Activated T-helper 1 cell treated with anti-CD3 and anti-CD28 coated beads, Interleukin-12 subunit alpha, Interleukin-12 subunit beta, Interleukin-2, Interleukin-4 antibody, amounts not matched to agents 30 ng/mL and 10 ng/mL and 1 ng/mL, durations not matched to agents 14 hours and 24 hours and 36 hours (primary cell): ENCODE measurements at regions of chr19 and their contacts with region 1.

Region 1: GRCh38 chr19:54518844-54519243 is 16.2 kb downstream of the LAIR2 start:
- DNase-seq: peak; percentile 51
- H3K4me3 Mint-ChIP-seq: peak overlapping the region; percentile 71
- H3K27ac Mint-ChIP-seq: peak overlapping the region; percentile 91
- H3K4me1 Mint-ChIP-seq: peaks cover 59% of the 10 kb centered on the region
- H3K27me3 Mint-ChIP-seq: peaks cover 3% of the 10 kb centered on the region

Region 2: GRCh38 chr19:54502518-54503048 is 16.3 kb before region 1 on chr19 and contains the start of gene LAIR2:
- intact Hi-C with region 1: loop called (anchors 2 kb)
- DNase-seq: no peak
- H3K4me3 Mint-ChIP-seq: peak within 1 kb of the TSS; percentile 79
- H3K27ac Mint-ChIP-seq: peak within 1 kb of the TSS; percentile 79
- H3K4me1 Mint-ChIP-seq: peaks cover 41% of the 10 kb centered on the region
- H3K27me3 Mint-ChIP-seq: peaks cover 13% of the 10 kb centered on the region
- total RNA-seq, gene LAIR2: 45.7 and 49.1 TPM in 2 replicates

Region 3: DNA sequence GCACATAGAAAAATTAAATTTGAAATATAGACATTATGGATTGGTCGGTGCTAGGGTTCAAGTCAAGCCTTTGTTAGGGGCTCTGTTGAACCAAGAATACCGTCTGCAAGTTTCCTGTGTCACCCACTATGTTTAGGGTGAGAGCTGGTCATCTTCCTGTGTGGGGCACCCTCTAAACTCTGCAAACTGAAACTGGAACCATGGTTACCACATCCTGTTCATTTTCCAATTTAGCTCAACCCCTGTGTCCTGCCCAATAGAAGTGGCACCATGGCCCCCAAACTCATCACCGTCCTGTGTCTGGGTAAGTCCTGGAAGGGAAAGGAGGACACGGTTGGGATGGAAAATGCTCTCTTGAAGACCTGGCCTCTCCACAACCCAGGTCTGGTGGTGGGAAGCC is 13.7 kb after region 1 on chr19:
- intact Hi-C with region 1: loop called (anchors 1 kb)
- DNase-seq: no peak
- H3K4me3 Mint-ChIP-seq: peak overlapping the region; percentile 53
- H3K27ac Mint-ChIP-seq: peak overlapping the region; percentile 79
- H3K4me1 Mint-ChIP-seq: peaks cover 40% of the 10 kb centered on the region
- H3K27me3 Mint-ChIP-seq: peaks cover 11% of the 10 kb centered on the region

Region 4: DNA sequence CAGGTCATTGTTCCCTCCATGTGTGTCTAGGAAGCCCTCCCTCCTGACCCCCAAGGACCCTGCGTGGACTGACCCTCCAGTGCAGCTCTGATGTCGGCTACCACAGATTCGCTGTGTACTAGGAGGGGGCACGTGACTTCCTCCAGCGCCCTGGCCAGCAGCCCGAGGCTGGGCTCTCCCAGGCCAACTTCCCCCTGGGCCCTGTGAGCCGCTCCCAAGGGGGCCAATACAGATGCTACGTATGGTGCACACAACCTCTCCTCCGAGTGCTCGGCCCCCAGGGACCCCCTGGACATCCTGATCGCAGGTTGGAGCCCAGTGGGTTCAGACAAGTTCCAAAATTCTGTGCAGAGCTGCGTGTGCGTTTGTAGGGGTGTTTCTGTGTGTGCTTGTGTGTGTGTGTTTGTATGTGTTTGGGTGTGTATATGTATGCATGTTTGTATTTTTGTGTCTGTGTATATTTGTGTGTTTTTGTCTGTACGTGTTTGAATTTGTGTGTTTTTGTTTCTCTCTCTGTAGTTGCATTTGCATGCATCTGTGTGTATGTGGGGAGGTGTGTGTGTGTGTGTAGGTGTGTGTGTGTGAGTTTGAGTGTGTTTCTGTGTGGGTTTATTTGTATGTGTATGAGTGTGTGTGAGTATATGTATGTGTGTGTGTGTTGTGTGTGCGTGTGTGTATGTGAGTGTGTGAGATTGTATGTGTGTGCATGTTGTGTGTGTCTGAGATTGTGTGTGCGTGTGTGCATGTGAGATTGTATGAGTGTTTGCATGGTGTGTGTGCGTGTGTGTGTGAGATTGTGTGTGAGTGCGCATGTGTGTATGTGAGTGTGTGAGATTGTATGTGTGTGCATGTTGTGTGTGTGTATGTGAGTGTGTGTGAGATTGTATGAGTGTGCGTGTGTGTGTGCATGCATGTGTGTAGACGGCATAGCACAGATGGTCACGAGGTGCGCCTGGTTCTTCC is 33.4 kb after region 1 on chr19:
- intact Hi-C with region 1: no loop called
- DNase-seq: no peak
- H3K4me3 Mint-ChIP-seq: no peak overlapping the region
- H3K27ac Mint-ChIP-seq: no peak overlapping the region
- H3K4me1 Mint-ChIP-seq: peaks cover 7% of the 10 kb centered on the region
- H3K27me3 Mint-ChIP-seq: no peaks in the 10 kb centered on the region

Region 5: DNA sequence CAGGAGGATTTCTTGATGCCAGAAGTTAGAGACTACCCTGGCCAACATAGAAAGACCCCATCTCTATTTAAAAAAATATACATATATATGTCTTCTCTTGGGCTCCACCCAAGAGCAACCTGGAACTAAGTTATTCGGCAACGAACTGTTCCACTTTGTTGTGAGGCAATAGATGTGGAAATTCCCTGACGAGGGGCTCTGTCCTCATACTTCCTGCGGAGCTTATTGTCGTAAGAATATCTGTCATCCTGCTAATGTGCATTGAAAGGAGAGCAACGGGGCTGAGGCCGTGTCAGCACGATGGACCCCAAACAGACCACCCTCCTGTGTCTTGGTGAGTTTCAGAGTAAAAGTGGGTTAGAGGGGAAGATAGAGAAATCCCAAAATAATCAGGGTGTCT is 355.1 kb after region 1 on chr19 and contains the start of gene FCAR:
- intact Hi-C with region 1: no loop called
- DNase-seq: no peak
- H3K4me3 Mint-ChIP-seq: no peak within 1 kb of the TSS
- H3K27ac Mint-ChIP-seq: no peak within 1 kb of the TSS
- H3K4me1 Mint-ChIP-seq: no peaks in the 10 kb centered on the region
- H3K27me3 Mint-ChIP-seq: peaks cover 7% of the 10 kb centered on the region
- total RNA-seq, gene FCAR: not detected in 2 replicates

Region 6: GRCh38 chr19:55688422-55689246 is 1169.8 kb after region 1 on chr19:
- intact Hi-C with region 1: no loop called
- DNase-seq: no peak
- H3K4me3 Mint-ChIP-seq: no peak overlapping the region
- H3K27ac Mint-ChIP-seq: no peak overlapping the region
- H3K4me1 Mint-ChIP-seq: no peaks in the 10 kb centered on the region
- H3K27me3 Mint-ChIP-seq: no peaks in the 10 kb centered on the region